Psoas muscle (tissue), 8 donors: ENCODE measurements at regions of chr9 and their contacts with region 1.

Region 1: DNA sequence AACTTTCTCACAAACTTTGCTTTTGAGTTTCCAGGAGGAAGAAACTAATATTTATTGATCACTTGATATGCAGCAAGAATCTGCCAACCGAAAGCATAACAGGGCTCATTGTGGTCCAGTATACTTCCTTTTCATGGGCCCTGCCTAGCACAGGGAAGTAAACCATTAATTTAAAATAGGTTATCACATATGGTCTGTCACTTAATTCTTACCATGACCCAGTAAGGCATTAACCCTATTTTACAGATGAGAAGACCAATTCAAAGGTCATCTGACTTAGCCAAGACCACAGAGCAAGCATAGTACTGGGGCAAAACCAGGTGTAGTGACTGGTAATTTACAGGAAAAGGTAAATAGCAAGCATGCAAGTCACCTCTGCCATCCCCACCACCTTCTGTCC is 336.9 kb upstream of the DMAC1 start:
- DNase-seq: no peak
- ATAC-seq: no peak
- H3K4me3 ChIP-seq: no peak overlapping the region
- H3K27ac ChIP-seq: no peak overlapping the region
- H3K4me1 ChIP-seq: no peaks in the 10 kb centered on the region
- H3K27me3 ChIP-seq: no peaks in the 10 kb centered on the region
- CTCF ChIP-seq: no peak

Region 2: DNA sequence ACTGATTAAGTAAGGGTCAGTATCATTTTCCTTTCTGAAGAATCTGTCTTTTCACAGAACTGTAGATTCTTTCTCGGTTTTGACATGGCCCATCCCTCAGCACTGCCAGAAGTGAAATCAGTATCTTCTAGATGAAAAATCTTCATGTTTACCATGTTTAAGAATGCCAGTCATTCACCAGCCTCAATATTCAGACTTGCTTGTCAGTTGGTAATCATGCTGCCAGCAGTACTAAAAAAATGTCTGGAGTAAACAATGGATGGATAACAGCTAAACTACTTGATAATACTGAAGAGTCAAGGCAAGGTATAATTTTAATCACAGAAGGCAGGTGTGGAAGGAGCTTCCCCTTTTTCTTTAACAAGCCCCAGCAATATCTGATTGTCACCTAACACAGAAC is 30.1 kb before region 1 on chr9:
- intact Hi-C with region 1: no loop called
- DNase-seq: no peak
- ATAC-seq: no peak
- H3K4me3 ChIP-seq: no peak overlapping the region
- H3K27ac ChIP-seq: no peak overlapping the region
- H3K4me1 ChIP-seq: no peaks in the 10 kb centered on the region
- H3K27me3 ChIP-seq: no peaks in the 10 kb centered on the region
- CTCF ChIP-seq: no peak

Region 3: DNA sequence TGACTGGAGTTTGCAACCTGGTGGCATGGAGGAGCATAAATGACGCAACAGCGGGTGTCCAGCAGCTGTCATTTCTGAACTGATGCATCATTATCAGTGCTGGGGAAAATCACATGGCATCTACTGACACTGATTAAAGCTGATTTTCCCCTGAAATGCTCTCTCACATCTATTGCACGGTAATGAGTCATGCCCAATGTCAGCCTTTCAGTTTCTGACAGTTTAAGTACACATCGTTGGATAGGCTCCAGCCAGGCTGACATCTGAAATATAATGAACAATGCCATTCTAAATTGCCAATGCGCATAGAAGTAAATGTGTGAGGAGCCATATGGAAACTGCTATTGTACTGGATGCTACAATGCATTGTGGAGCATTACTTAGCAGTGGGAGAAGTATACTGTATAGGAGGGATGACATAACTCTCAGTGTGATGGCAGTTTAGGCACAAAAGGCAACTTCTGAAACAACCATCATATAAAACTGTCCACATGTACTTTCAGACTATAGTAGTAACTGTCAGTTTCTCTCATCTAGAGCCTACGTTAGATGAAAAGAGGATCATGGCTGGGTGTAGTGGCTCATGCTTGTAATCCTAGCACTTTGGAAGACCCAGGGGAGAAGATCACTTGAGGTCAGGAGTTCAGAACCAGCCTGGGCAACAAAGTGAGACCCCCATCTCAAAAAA is 52.4 kb after region 1 on chr9:
- intact Hi-C with region 1: loop called in 1 of 2 experiments (anchors 10 kb)
- DNase-seq: no peak
- ATAC-seq: no peak
- H3K4me3 ChIP-seq: no peak overlapping the region
- H3K27ac ChIP-seq: no peak overlapping the region
- H3K4me1 ChIP-seq: no peaks in the 10 kb centered on the region
- H3K27me3 ChIP-seq: no peaks in the 10 kb centered on the region
- CTCF ChIP-seq: no peak